ENCODE measurements at regions of chr12 and their contacts with region 1.

Region 1: GRCh38 chr12:115998119-115998633 is 279.3 kb downstream of the MED13L start:
- DNase-seq: no peak
- H3K4me3 ChIP-seq: no peak overlapping the region
- H3K27ac ChIP-seq: peak overlapping the region; percentile 0
- H3K4me1 ChIP-seq: peaks cover 9% of the 10 kb centered on the region
- H3K27me3 ChIP-seq: no peaks in the 10 kb centered on the region
- CTCF ChIP-seq: peak; percentile 86

Region 2: DNA sequence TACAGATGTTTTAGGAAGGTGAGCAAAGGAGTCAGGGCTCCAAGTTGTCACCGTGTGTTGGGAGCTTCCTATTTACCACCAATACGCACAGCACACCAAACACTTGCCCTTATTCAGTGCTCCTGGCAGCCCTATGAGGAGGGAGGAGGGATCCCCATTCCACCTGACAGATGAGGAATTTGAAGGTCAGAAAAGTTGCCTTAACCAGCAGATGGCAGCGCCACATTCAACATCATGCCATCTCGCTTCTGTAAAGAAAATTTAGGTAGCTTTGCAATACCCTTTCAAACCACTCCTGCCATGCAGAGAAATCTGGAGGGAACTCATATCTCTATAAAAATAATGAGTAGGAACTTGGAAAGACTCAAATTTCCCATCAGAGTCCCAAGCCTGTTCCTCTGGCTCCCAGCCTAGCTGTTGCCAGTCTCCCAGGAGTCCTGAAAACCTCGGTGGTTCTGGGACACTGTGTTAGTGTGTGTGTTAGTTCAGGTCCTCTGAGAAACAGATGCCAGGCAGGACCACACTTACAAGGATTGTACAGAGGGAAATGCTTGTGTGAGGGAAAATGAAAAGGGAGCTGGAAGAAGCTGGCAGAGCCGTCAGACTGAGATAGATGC is 131.2 kb before region 1 on chr12:
- intact Hi-C with region 1: no loop called
- DNase-seq: no peak
- H3K4me3 ChIP-seq: no peak overlapping the region
- H3K27ac ChIP-seq: no peak overlapping the region
- H3K4me1 ChIP-seq: peaks cover 28% of the 10 kb centered on the region
- H3K27me3 ChIP-seq: no peaks in the 10 kb centered on the region
- CTCF ChIP-seq: no peak

Region 3: DNA sequence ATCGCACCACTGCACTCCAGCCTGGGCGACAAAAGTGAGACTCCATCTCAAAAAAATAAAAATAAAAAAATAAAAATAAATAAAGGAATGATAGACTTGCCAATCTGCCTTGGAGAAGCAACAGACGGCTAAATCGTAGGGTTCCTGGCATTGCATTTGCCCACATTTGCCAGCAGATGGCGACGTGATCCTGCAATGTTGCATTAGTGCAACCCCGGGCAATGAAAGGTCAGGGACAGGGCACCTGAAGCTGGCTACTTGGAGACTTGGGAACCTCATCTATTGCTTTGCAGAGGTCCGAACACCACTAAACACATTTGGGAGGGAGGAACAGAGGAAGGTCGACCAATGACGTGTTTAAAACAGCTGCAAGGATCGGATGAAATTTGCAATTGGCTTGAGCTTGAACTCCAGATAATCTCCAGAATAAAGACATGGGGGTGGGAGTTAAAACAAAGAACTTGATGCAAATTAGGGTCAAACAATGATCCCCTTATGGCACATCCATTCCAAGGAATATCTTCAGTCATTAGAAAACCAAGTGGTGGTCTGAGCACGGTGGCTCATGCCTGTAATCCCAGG is 705.1 kb after region 1 on chr12:
- intact Hi-C with region 1: loop called (anchors 10 kb)
- DNase-seq: peak; percentile 54
- H3K4me3 ChIP-seq: no peak overlapping the region
- H3K27ac ChIP-seq: no peak overlapping the region
- H3K4me1 ChIP-seq: peaks cover 12% of the 10 kb centered on the region
- H3K27me3 ChIP-seq: no peaks in the 10 kb centered on the region
- CTCF ChIP-seq: peak; percentile 95

Measured in left ventricle myocardium inferior (tissue), 1 donor.